Ascending aorta (tissue), 2 donors: ENCODE measurements at regions of chr12 and their contacts with region 1.

Region 1: GRCh38 chr12:93870020-93870795 is 193.0 kb downstream of the CRADD start:
- DNase-seq: no peak
- H3K4me3 ChIP-seq: no peak overlapping the region
- H3K27ac ChIP-seq: peak overlapping the region; percentile 34 to 57
- H3K4me1 ChIP-seq: peaks cover 0 to 3% of the 10 kb centered on the region in 2 donors
- H3K27me3 ChIP-seq: no peaks in the 10 kb centered on the region
- CTCF ChIP-seq: no peak

Region 2: DNA sequence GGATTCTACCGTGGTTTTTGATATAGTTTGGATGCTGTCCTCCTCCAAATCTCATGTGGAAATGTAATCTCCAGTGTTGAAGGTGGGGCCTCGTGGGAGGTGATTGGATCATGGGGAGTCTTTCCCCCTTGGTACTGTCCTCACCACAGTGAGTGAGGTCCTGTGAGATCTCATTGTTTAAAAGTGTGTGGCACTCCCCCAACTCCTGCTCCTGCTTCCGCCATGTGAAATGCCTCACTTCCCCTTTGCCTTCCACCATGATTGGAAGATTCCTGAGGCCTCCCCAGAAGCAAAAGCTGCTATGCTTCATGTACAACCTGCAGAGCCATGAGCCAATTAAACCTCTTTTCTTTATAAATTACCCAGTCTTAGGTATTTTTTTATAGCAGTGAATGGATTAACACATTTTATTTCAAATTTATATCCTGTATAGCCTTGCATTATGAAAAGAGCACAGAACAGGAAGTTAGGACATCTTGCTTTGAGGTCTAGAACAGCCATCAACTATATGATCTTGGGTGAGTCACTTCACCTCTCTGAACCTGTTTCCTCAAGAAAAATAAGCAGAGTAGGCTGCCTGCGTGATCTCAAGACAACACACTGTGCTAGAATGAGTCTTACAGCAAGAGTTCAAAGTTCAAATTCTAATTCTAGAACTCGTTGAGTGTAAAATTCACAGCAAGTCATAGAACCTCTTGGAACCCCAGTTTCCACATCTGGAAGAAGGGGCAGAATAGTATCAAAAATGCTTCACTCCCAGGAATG is 780.2 kb before region 1 on chr12:
- intact Hi-C with region 1: no loop called
- DNase-seq: no peak
- H3K4me3 ChIP-seq: no peak overlapping the region
- H3K27ac ChIP-seq: no peak overlapping the region
- H3K4me1 ChIP-seq: no peaks in the 10 kb centered on the region
- H3K27me3 ChIP-seq: no peaks in the 10 kb centered on the region
- CTCF ChIP-seq: no peak

Region 3: GRCh38 chr12:93832131-93832530 is 38.1 kb before region 1 on chr12:
- intact Hi-C with region 1: loop called (anchors 5 kb)
- DNase-seq: no peak
- H3K4me3 ChIP-seq: no peak overlapping the region
- H3K27ac ChIP-seq: no peak overlapping the region
- H3K4me1 ChIP-seq: peaks cover 0 to 8% of the 10 kb centered on the region in 2 donors
- H3K27me3 ChIP-seq: no peaks in the 10 kb centered on the region
- CTCF ChIP-seq: no peak

Region 4: DNA sequence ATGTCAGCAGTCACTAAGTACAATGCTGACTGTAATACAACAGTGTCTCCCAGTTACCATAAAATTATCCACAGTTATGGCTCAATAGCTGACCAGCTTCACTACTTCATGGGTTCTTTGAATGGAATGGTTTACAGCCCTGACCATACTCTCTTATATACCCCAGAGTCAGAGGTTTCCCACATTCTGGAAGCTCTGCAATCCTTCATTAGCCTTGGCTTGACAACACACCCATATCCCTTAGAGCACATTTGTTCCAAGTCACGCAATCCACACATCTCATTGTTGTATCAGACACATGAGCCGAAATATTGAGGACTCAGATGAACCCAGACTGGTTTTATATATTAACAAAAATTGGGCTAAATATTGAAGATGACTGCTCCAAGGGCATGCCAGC is 68.7 kb after region 1 on chr12:
- intact Hi-C with region 1: no loop called
- DNase-seq: no peak
- H3K4me3 ChIP-seq: no peak overlapping the region
- H3K27ac ChIP-seq: no peak overlapping the region
- H3K4me1 ChIP-seq: peaks cover 0 to 4% of the 10 kb centered on the region in 2 donors
- H3K27me3 ChIP-seq: no peaks in the 10 kb centered on the region
- CTCF ChIP-seq: no peak